ENCODE measurements at regions of chr10 and their contacts with region 1.

Region 1: DNA sequence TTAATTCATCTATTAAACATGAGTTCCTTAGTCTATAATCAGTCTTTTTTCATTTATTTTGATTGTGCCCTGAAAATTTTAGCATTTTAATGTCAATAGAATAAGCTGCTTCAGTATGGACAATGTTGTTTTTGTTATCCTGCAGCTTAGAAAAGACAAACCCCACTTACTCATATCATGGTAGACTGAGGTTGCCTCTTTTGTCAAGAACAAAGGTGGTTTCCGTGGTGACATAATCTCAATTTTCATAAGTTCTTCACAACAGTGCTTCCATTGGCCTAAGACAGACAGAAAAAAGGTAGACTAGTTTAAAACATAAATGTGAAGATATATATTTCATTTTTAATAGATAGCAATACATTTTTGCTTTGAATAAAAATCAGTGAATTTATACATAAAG is 69.1 kb downstream of the RTKN2 start:
- DNase-seq: peak in 4 of 9 donors; percentile 22 to 40 (median 28)
- ATAC-seq: peak; percentile 55
- H3K4me3 ChIP-seq: no peak overlapping the region
- H3K4me3 Mint-ChIP-seq: peak overlapping the region in 1 of 10 donors; percentile 56
- H3K27ac ChIP-seq: no peak overlapping the region
- H3K27ac Mint-ChIP-seq: peak overlapping the region in 3 of 9 donors; percentile 32 to 64 (median 51)
- H3K4me1 ChIP-seq: peaks cover 0 to 13% of the 10 kb centered on the region in 2 donors
- H3K4me1 Mint-ChIP-seq: peaks cover 7 to 37% (median 28%) of the 10 kb centered on the region in 7 donors
- H3K27me3 ChIP-seq: no peaks in the 10 kb centered on the region
- H3K27me3 Mint-ChIP-seq: no peaks in the 10 kb centered on the region

Region 2: GRCh38 chr10:62149621-62150020 is 50.0 kb before region 1 on chr10:
- CTCF ChIA-PET with region 1: interaction called, 3 read pairs
- POLR2A ChIA-PET with region 1: no interaction called
- intact Hi-C with region 1: loop called in 1 of 2 experiments (anchors 5 kb)
- DNase-seq: no peak
- ATAC-seq: no peak
- H3K4me3 ChIP-seq: no peak overlapping the region
- H3K4me3 Mint-ChIP-seq: no peak overlapping the region
- H3K27ac ChIP-seq: no peak overlapping the region
- H3K27ac Mint-ChIP-seq: peak overlapping the region in 1 of 9 donors; percentile 18
- H3K4me1 ChIP-seq: peaks cover 0 to 4% of the 10 kb centered on the region in 2 donors
- H3K4me1 Mint-ChIP-seq: peaks cover 5 to 20% (median 15%) of the 10 kb centered on the region in 7 donors
- H3K27me3 ChIP-seq: no peaks in the 10 kb centered on the region
- H3K27me3 Mint-ChIP-seq: no peaks in the 10 kb centered on the region

Region 3: GRCh38 chr10:62214364-62214874 is 14.8 kb after region 1 on chr10:
- CTCF ChIA-PET with region 1: interaction called, 3 read pairs
- POLR2A ChIA-PET with region 1: interaction called, 3 read pairs
- intact Hi-C with region 1: loop called in 1 of 2 experiments (anchors 2 kb)
- DNase-seq: no peak
- ATAC-seq: no peak
- H3K4me3 ChIP-seq: no peak overlapping the region
- H3K4me3 Mint-ChIP-seq: no peak overlapping the region
- H3K27ac ChIP-seq: no peak overlapping the region
- H3K27ac Mint-ChIP-seq: no peak overlapping the region
- H3K4me1 ChIP-seq: no peaks in the 10 kb centered on the region
- H3K4me1 Mint-ChIP-seq: peaks cover 0 to 19% (median 9%) of the 10 kb centered on the region in 7 donors
- H3K27me3 ChIP-seq: no peaks in the 10 kb centered on the region
- H3K27me3 Mint-ChIP-seq: peaks cover 0 to 4% (median 0%) of the 10 kb centered on the region in 5 donors

Region 4: GRCh38 chr10:62233494-62234283 is 34.1 kb after region 1 on chr10:
- CTCF ChIA-PET with region 1: no interaction called
- POLR2A ChIA-PET with region 1: no interaction called
- intact Hi-C with region 1: loop called in 1 of 2 experiments (anchors 2 kb)
- DNase-seq: peak in 2 of 9 donors; percentile 3 to 23
- ATAC-seq: no peak
- H3K4me3 ChIP-seq: no peak overlapping the region
- H3K4me3 Mint-ChIP-seq: peak overlapping the region in 9 of 10 donors; percentile 13 to 78 (median 56)
- H3K27ac ChIP-seq: no peak overlapping the region
- H3K27ac Mint-ChIP-seq: peak overlapping the region in 7 of 9 donors; percentile 17 to 89 (median 76)
- H3K4me1 ChIP-seq: peaks cover 0 to 13% of the 10 kb centered on the region in 2 donors
- H3K4me1 Mint-ChIP-seq: peaks cover 7 to 51% (median 37%) of the 10 kb centered on the region in 7 donors
- H3K27me3 ChIP-seq: no peaks in the 10 kb centered on the region
- H3K27me3 Mint-ChIP-seq: no peaks in the 10 kb centered on the region